ENCODE measurements at regions of chr11 and their contacts with region 1.

Region 1: GRCh38 chr11:82900277-82901164 is at the start of gene PRCP:
- DNase-seq: peak; percentile 89
- H3K4me3 Mint-ChIP-seq: peak within 1 kb of the TSS; percentile 82
- H3K27ac Mint-ChIP-seq: peak within 1 kb of the TSS; percentile 73
- H3K4me1 Mint-ChIP-seq: peaks cover 23% of the 10 kb centered on the region
- H3K27me3 Mint-ChIP-seq: no peaks in the 10 kb centered on the region
- CTCF ChIP-seq: no peak
- total RNA-seq, gene PRCP: 22.0 and 22.7 TPM in 2 replicates

Region 2: DNA sequence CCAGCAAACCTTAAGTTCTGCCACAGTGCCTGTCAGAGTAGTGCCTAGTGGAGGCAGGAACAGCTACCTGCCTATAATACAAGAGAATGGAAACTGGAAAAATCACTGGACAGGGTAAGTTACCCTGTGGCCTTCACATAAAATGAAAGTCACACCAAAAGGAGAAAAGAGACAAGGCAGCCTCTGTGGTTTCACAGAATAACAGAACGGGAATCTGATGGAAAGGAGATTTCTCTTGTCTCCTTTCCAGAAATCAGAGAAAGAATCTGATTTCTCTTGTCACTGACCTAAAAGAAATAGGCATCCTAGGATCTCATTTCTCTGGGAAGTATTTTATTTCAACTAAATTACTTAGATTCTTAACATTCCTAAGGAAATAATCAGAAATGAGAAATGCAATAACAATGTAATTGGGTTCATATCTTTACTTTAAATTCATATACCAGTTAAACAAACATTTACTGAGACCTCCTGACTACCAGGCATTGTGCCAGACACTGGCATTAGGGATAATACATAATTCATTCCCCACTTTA is 41.9 kb before region 1 on chr11:
- CTCF ChIA-PET with region 1: no interaction called
- intact Hi-C with region 1: no loop called
- DNase-seq: peak; percentile 30
- H3K4me3 Mint-ChIP-seq: no peak overlapping the region
- H3K27ac Mint-ChIP-seq: no peak overlapping the region
- H3K4me1 Mint-ChIP-seq: peaks cover 14% of the 10 kb centered on the region
- H3K27me3 Mint-ChIP-seq: no peaks in the 10 kb centered on the region
- CTCF ChIP-seq: no peak

Region 3: DNA sequence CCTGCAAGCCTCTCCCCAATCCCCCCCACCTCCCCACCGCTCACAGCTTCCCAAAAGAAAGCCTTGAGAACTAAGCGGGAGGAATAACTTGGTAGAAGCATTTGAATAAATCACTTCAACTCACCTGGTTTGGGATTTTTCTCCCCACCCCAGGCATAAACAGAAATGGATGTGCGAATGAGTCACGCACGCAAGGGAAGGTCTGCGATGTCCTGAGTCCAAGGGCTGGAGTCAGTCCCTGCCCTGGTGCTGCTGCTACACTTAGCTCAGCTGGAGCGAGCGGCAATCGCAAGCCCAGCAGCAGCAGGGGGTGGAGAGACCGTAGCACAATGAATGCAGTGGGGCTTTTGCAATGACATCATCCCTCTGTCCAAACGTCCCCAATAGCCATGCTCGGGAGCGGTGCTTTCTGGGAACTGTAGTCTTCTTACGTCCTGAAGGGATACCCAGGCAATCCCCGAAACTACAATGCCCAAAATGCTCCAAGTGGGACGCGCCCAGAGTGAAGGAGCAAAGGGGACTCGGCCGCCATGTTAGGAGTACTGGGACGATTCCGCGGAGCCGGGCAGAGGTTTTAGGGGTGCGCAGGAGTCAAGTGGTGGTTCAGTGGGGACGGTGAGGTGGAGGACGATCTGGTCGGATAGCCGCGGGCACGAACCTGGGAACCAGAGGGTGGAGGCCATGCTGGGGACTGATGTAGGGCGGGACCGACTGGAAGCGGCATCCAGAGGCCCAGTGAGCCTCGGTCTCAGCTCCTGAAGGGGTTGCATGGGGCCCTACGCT is 171.2 kb after region 1 on chr11 and contains the start of gene RAB30:
- CTCF ChIA-PET with region 1: interaction called, 10 read pairs
- intact Hi-C with region 1: loop called (anchors 5 kb)
- DNase-seq: peak; percentile 88
- H3K4me3 Mint-ChIP-seq: no peak within 1 kb of the TSS
- H3K27ac Mint-ChIP-seq: no peak within 1 kb of the TSS
- H3K4me1 Mint-ChIP-seq: no peaks in the 10 kb centered on the region
- H3K27me3 Mint-ChIP-seq: no peaks in the 10 kb centered on the region
- CTCF ChIP-seq: no peak
- total RNA-seq, gene RAB30: 1.5 and 2.2 TPM in 2 replicates